Aorta (tissue), 5 donors: ENCODE measurements at regions of chr19 and their contacts with region 1.

Region 1: DNA sequence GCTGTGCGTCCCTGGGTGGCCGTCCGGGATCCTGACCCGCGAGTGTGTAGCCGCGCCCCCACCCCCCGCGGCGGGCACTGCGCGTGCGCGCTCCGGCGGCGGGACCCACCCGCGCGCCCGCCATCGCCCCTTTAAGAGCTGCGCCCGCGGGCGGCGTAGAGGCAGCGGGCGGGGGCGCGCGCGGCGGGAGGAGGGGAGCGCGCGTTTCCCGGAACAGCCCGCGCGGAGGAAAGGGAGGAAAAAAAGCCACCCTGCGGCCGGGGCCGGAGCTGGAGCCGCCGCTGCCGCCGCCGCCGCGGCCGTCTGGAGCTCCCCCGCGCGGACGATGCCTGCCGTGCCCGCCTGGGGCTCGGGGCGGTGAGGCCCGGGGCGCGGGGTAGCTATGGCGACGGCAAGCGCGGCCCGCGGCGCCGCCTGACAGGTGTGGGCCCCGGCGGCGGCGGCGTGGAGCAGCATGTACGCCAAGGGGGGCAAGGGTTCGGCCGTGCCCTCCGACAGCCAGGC is at the start of gene SSBP4:
- DNase-seq: peak; percentile 85 to 90
- ATAC-seq: peak; percentile 36
- H3K4me3 ChIP-seq: peak within 1 kb of the TSS; percentile 44 to 74
- H3K27ac ChIP-seq: peak within 1 kb of the TSS in 1 of 2 donors; percentile 46
- H3K4me1 ChIP-seq: no peaks in the 10 kb centered on the region
- H3K27me3 ChIP-seq: no peaks in the 10 kb centered on the region
- total RNA-seq, gene SSBP4: 51.4 to 89.4 TPM

Region 2: DNA sequence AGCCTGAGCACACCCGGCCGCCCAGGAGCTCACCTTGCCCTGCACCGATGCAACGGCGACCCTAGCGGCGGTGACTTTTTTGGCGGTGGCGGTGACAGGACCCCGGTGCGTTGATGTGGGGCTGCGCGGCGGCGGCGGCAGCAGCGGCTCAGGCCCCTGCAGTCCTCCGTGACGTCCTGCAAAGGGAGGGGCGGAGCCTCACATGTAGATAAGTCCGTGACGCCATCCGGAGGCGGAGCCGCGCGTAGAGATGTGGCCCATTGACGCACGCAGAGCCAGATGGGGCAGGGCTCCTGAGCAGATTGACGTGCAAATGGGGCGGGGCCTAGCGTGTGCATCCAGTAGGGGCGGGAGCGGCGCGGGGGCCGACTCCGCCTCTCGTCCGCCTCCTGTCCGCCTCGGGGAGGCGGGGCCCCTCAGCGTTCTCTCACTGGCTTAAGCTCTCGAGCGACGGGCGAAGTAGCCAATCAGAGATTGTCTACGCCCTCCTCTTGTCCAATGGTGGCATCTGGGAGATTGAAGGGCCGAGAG is 215.3 kb before region 1 on chr19 and contains the start of gene RAB3A:
- intact Hi-C with region 1: loop called in 1 of 2 experiments (anchors 10 kb)
- DNase-seq: peak; percentile 100
- ATAC-seq: peak; percentile 98
- H3K4me3 ChIP-seq: peak within 1 kb of the TSS; percentile 41 to 66
- H3K27ac ChIP-seq: peak within 1 kb of the TSS; percentile 72 to 87
- H3K4me1 ChIP-seq: peaks cover 0 to 3% of the 10 kb centered on the region in 2 donors
- H3K27me3 ChIP-seq: no peaks in the 10 kb centered on the region
- total RNA-seq, gene RAB3A: 3.4 to 3.8 TPM

Region 3: DNA sequence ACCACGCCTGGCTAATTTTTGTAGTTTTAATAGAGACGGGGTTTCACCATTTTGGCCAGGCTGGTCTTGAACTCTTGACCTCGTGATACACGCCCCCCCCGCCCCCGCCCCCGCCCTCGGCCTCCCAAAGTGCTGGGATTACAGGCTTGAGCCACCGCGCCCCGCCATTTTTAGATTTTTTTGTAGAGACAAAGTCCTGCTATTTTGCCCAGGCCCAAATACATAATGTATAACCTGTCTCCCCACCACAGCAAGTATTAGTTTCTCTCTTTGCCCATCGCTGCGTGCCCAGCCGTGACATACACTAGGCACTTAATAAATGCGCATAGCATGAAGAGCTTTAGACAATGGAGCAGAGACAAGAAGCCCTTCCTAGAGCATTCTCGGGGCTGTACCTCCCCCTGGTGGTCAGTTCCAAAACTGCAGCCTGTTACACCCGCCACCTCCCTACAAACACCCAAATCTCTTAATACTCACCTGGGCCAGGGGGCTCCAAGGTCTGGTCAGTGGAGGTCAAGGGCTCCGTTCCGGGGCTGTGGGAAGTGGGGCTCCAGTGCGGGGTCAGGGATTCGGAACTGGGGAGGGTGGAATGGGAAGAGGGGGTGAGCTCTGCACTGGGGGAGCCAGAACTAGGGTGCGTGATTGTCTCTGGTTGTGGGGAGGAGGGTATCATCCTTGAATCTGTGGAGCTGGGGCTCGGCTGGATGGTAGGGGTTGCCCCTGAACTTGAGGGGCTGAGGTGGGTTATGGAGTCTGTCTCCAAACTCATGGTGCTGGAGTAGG is 167.5 kb before region 1 on chr19:
- intact Hi-C with region 1: loop called in 1 of 2 experiments (anchors 10 kb)
- DNase-seq: peak; percentile 76 to 91
- ATAC-seq: peak; percentile 80
- H3K4me3 ChIP-seq: no peak overlapping the region
- H3K27ac ChIP-seq: no peak overlapping the region
- H3K4me1 ChIP-seq: no peaks in the 10 kb centered on the region
- H3K27me3 ChIP-seq: no peaks in the 10 kb centered on the region

Region 4: GRCh38 chr19:18281082-18282020 is 137.9 kb before region 1 on chr19 and contains the start of gene JUND:
- intact Hi-C with region 1: loop called in 1 of 2 experiments (anchors 2 kb)
- DNase-seq: peak; percentile 99
- ATAC-seq: peak; percentile 83
- H3K4me3 ChIP-seq: peak within 1 kb of the TSS; percentile 77 to 97
- H3K27ac ChIP-seq: peak within 1 kb of the TSS; percentile 95 to 100
- H3K4me1 ChIP-seq: no peaks in the 10 kb centered on the region
- H3K27me3 ChIP-seq: no peaks in the 10 kb centered on the region
- total RNA-seq, gene JUND: 214 to 492 TPM

Region 5: GRCh38 chr19:18304458-18305310 is 114.6 kb before region 1 on chr19:
- intact Hi-C with region 1: loop called in 1 of 2 experiments (anchors 1 kb)
- DNase-seq: peak; percentile 94 to 97
- ATAC-seq: peak; percentile 90
- H3K4me3 ChIP-seq: peak overlapping the region in 1 of 2 donors; percentile 24
- H3K27ac ChIP-seq: peak overlapping the region; percentile 96
- H3K4me1 ChIP-seq: no peaks in the 10 kb centered on the region
- H3K27me3 ChIP-seq: no peaks in the 10 kb centered on the region

Region 6: DNA sequence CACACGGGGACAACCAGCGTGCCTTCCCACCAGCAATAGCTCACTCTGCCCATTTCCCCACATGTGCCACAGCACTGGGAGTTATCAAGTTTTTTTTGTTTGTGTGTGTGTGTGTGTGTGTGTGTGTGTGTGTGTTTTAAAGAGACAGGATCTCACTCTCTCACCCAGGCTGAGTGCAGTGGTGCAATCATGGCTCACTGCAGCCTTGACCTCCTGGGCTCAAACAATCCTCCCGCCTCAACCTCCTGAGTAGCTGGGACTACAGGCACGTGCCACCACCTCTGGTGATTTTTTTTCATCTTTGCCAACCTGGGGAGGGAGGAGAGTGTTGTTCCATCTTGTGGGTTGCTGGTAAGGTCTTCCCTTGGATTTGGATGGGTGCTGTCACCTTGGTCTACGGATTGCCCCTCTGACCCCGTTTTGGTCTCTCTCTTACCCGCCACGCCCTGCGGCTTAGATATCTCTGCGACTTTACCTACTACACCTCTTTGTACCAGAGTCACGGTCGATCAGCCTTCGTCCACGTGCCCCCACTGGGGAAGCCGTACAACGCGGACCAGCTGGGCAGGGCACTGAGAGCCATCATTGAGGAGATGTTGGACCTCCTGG is 56.2 kb before region 1 on chr19:
- intact Hi-C with region 1: no loop called
- DNase-seq: no peak
- ATAC-seq: no peak
- H3K4me3 ChIP-seq: no peak overlapping the region
- H3K27ac ChIP-seq: no peak overlapping the region
- H3K4me1 ChIP-seq: no peaks in the 10 kb centered on the region
- H3K27me3 ChIP-seq: no peaks in the 10 kb centered on the region

Region 7: GRCh38 chr19:18388100-18388959 is 30.9 kb before region 1 on chr19:
- intact Hi-C with region 1: no loop called
- DNase-seq: peak; percentile 92 to 96
- ATAC-seq: peak; percentile 90
- H3K4me3 ChIP-seq: no peak overlapping the region
- H3K27ac ChIP-seq: no peak overlapping the region
- H3K4me1 ChIP-seq: no peaks in the 10 kb centered on the region
- H3K27me3 ChIP-seq: peaks cover 0 to 2% of the 10 kb centered on the region in 2 donors